Heart left ventricle (tissue), 16 donors: ENCODE measurements at regions of chr18 and their contacts with region 1.

Region 1: GRCh38 chr18:63161761-63162195 is 157.8 kb downstream of the BCL2 start:
- DNase-seq: peak in 4 of 5 donors; percentile 59 to 74 (median 66)
- ATAC-seq: peak; percentile 81 to 93 (median 90)
- H3K4me3 ChIP-seq: no peak overlapping the region
- H3K27ac ChIP-seq: peak overlapping the region in 11 of 12 donors; percentile 36 to 85 (median 69)
- H3K4me1 ChIP-seq: peaks cover 0 to 57% (median 25%) of the 10 kb centered on the region in 12 donors
- H3K27me3 ChIP-seq: no peaks in the 10 kb centered on the region
- CTCF ChIP-seq: no peak
- POLR2A ChIP-seq: no peak

Region 2: DNA sequence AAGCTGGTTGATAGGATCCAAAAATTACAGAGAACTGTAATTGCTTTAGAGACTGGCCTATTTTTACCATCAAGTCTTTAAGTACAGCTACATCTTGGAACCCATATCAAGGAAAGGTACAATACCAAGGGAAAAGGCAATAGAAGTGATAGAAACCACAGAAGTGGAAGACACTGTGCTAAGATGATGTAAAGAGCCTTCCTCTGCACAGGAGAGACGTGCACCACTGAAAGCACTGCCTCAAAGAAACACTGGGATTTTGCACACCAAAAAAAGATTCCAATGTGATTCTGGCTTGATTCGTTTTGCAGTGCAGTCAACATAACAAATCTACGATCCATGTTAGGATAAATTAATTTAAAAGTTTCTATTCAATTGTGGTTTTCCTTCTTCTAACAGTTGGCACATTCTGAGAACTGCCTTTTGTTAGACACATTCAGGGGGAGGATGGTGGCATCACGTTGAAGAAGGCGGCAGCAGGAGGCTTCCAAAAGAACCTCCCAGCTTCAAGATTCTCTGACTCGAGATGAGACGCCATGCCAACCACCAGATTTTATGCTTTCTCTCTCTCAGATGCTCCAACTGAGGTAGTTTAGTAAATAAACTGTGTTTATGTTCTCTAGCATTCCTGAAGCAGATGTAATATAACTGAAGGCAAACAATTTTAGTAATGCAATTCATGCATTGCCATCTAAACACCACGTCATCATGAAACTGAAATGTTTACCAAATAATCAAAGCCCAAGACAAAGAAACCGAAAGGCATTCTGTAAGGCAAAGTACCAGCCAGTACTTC is 54.9 kb after region 1 on chr18:
- intact Hi-C with region 1: loop called in 1 of 10 experiments (anchors 10 kb)
- DNase-seq: no peak
- ATAC-seq: no peak
- H3K4me3 ChIP-seq: peak overlapping the region in 1 of 12 donors; percentile 2
- H3K27ac ChIP-seq: peak overlapping the region in 2 of 12 donors; percentile 6 to 61
- H3K4me1 ChIP-seq: peaks cover 0 to 48% (median 0%) of the 10 kb centered on the region in 12 donors
- H3K27me3 ChIP-seq: no peaks in the 10 kb centered on the region
- CTCF ChIP-seq: no peak
- POLR2A ChIP-seq: no peak